ENCODE measurements at regions of chr1 and their contacts with region 1.

Region 1: DNA sequence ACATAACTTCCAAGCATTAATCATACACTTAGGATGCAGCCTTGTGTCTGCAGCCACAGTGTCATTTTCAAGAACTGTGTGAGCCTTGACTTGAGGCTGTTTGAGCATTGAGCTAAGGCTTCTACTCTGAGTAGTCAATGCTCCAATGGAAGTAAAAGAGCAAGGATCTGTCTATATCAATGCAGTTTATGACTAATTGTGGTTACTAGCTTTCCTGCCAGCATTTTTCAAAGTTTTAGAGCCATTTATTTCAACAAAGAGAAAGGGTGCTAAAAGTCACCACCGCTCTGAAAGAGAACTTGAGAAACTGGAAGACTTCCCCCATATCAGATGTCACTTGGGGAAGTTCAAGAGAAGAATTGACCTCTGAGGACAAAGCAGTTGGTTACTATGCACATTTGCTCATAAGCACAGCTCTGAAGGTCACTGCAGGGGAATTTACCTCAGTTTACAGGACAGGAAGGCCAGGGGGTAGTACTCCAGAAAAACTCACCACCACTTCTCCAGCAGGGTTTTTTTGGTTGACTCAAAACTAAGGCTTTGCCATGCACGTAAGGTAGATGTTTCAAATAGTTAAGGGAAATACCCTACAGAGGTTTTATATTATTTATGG is 24.5 kb upstream of the RGS1 start:
- DNase-seq: no peak
- H3K4me3 Mint-ChIP-seq: peak overlapping the region; percentile 6
- H3K27ac Mint-ChIP-seq: peak overlapping the region; percentile 85
- H3K4me1 Mint-ChIP-seq: peaks cover 63% of the 10 kb centered on the region
- H3K27me3 Mint-ChIP-seq: no peaks in the 10 kb centered on the region

Region 2: DNA sequence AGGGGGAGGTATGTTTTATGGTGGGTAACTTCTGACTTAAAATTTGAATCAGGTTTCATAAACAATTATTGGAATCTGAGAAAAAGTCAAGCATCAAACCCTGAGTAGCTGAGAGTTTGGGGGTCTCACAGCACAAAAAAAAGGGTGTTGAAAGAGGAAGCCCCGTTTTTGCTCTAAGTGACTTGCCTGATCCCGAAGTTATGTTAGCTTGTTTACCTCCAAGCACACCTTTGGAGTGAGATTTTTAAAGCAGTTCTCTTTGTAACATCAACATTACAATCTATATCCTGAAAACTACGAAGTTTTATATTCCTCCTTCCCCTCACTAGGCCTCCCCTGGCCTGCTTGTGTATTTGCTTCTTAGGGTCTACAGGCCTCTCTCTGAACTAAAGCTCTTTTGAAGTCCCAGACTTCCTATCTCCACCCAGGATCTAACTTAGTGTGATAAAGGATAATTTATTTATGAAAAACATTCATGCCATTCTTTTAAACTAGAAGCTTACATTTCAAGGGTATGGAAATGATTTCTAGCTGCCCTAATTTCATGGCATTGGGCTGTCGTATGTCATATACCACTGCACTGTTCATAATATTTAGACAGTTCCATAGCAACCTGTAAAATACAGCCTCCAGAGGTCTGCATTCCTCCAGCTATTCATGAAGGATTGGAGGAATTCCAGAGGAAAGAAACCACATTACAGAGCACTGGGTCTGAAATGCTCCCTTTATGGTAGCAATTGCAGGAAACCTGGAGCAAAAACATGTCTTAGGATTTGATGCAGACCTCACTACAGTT is 11.5 kb before region 1 on chr1:
- CTCF ChIA-PET with region 1: interaction called, 8 read pairs
- POLR2A ChIA-PET with region 1: interaction called, 17 read pairs
- DNase-seq: no peak
- H3K4me3 Mint-ChIP-seq: peak overlapping the region; percentile 17
- H3K27ac Mint-ChIP-seq: peak overlapping the region; percentile 83
- H3K4me1 Mint-ChIP-seq: peaks cover 73% of the 10 kb centered on the region
- H3K27me3 Mint-ChIP-seq: no peaks in the 10 kb centered on the region

Region 3: DNA sequence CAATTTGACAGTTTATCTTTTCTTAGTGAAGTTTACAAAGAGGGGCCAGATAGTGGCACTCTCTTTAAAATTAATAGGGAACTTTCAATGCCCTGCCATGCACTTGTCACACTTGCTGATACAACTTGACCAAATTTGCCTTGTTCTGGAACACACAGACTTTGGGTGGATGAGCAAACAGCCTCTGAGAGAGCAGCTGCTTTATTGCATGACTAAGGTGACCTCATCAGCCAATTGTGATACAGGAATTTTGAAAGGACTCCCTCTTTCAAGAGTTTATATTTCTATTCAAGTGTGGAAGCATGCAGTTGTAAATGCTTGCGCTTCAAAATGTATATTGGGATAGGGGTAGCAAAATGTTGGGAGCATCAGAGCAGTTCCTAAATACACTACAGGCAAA is 22.5 kb after region 1 on chr1:
- CTCF ChIA-PET with region 1: interaction called, 5 read pairs
- POLR2A ChIA-PET with region 1: interaction called, 17 read pairs
- DNase-seq: no peak
- H3K4me3 Mint-ChIP-seq: no peak overlapping the region
- H3K27ac Mint-ChIP-seq: peak overlapping the region; percentile 42
- H3K4me1 Mint-ChIP-seq: peaks cover 79% of the 10 kb centered on the region
- H3K27me3 Mint-ChIP-seq: no peaks in the 10 kb centered on the region

Measured in activated CD4-positive, alpha-beta memory T cell treated with anti-CD3 and anti-CD28 coated beads, Interleukin-2, amount 10 ng/mL, durations not matched to agents 7 days and 5 days (primary cell).